MCF 10A (cell line): ENCODE measurements at regions of chr1 and their contacts with region 1.

Region 1: GRCh38 chr1:159936273-159936904 is 9.0 kb downstream of the IGSF9 start:
- DNase-seq: peak; percentile 85
- H3K4me3 Mint-ChIP-seq: no peak overlapping the region
- H3K27ac Mint-ChIP-seq: no peak overlapping the region
- H3K4me1 Mint-ChIP-seq: peaks cover 22% of the 10 kb centered on the region
- H3K27me3 Mint-ChIP-seq: no peaks in the 10 kb centered on the region
- CTCF ChIP-seq: peak; percentile 100

Region 2: DNA sequence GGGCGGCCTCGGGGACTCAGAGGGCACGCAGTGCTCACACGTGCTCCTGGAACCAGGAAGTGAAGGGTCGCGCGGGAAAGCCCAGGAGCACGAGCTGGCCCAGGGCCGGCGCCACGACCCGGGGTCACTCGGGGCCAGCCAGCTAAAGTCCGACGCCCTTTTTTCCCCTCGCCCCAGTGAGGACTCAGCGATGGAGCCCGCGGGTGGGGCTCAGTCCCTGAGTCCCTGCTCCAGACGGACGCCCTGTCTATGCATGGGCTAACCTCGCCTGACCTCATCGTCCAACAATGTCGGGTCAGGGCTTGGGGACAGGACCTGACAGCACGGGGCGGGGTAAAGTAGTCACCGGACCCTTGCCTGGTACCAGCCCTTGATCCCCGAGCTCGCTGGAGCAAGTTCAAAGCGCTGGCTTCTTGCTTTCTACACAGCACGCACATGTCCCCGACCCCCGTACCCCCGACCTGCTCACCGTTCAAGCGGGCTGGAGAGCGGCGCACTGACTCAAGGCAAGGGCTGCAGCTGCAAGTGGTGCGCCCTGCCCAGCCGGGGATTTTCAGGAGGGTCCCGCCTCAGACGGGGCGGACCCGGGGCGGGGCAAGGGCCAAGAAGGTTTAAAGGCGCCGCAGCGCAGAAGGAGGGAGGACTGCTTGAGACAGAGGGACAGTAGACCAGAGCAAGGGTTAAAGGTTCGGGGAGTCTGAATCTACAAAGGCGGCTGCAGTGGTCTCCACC is 11.2 kb before region 1 on chr1 and contains the start of gene TAGLN2:
- CTCF ChIA-PET with region 1: interaction called, 91 read pairs
- POLR2A ChIA-PET with region 1: interaction called, 7 read pairs
- intact Hi-C with region 1: no loop called
- DNase-seq: peak; percentile 97
- H3K4me3 Mint-ChIP-seq: peak within 1 kb of the TSS; percentile 81
- H3K27ac Mint-ChIP-seq: peak within 1 kb of the TSS; percentile 99
- H3K4me1 Mint-ChIP-seq: peaks cover 44% of the 10 kb centered on the region
- H3K27me3 Mint-ChIP-seq: no peaks in the 10 kb centered on the region
- CTCF ChIP-seq: no peak
- total RNA-seq, gene TAGLN2: 464 and 483 TPM in 2 replicates

Region 3: DNA sequence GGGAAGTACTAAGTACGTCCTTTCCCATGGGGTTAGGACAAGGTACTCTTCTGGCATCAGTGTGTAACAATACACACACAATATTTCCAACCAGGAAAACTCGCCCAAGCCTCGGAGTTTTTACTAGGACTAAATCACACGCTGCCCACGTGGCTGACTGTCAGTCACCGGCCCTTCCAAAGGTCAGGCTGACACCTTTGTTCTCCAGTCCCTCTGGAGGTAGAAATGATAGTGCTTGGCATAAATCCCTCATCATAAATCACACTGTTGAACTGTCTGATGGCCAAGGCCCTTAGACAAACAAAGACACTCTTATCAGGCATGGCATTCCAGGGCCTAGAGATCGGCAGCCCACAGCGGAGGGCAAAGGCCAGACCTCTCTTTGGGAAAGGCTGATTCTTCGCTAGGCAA is 34.5 kb after region 1 on chr1:
- CTCF ChIA-PET with region 1: interaction called, 34 read pairs
- POLR2A ChIA-PET with region 1: interaction called, 3 read pairs
- intact Hi-C with region 1: no loop called
- DNase-seq: no peak
- H3K4me3 Mint-ChIP-seq: no peak overlapping the region
- H3K27ac Mint-ChIP-seq: no peak overlapping the region
- H3K4me1 Mint-ChIP-seq: peaks cover 6% of the 10 kb centered on the region
- H3K27me3 Mint-ChIP-seq: no peaks in the 10 kb centered on the region
- CTCF ChIP-seq: no peak

Region 4: DNA sequence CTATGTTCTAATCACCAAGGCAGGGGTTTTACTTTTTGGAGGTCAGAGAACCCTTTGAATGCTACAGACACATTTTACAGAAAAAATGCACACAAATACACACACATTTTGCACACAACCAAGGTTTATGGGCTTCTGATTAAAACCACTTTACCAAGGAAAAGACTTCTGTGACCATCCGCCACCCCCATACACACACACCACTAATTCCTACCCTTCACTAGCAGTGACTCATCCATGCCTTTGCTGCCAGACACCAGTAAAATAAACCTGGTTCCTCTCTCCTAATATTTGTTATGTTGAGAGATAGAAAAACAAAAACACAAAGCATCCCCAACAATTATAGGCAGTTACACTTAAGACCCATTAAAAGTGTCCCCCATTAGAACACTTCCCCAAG is 82.5 kb after region 1 on chr1:
- CTCF ChIA-PET with region 1: interaction called, 21 read pairs
- POLR2A ChIA-PET with region 1: interaction called, 3 read pairs
- intact Hi-C with region 1: no loop called
- DNase-seq: peak; percentile 67
- H3K4me3 Mint-ChIP-seq: no peak overlapping the region
- H3K27ac Mint-ChIP-seq: no peak overlapping the region
- H3K4me1 Mint-ChIP-seq: peaks cover 27% of the 10 kb centered on the region
- H3K27me3 Mint-ChIP-seq: no peaks in the 10 kb centered on the region
- CTCF ChIP-seq: no peak

Region 5: DNA sequence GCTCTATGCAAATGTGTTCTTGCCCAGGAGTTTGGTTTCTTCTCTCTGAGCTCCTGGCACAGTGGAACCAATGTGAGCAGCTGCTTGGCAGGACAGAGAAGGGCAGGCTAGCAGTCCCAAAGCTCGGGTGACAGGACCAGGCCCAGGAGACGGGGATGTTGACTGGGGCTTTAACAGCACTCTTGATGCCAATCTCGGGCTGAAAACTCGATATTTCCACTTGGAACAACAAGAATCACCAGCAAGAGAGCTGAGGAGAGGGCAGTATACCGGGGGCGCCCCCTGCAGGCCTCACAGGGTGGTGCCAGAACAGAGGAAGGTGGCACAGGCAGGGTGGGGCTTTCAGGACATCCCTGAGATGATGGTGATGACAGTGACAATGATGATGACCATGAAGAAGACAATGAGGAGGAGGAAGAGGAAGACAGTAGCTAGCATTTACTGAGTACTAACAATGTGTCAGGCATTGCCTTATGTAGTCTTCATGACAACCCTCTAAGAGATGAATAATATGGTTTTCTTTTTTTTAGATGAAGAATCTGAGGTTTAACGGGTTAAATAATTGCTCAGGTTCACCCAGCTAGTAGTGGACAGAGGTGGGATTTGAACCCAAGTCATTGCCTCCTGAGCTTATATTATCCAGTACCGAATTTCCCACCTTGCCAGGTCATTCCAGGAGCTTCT is 142.3 kb after region 1 on chr1:
- CTCF ChIA-PET with region 1: interaction called, 19 read pairs
- POLR2A ChIA-PET with region 1: no interaction called
- intact Hi-C with region 1: loop called (anchors 10 kb)
- DNase-seq: peak; percentile 67
- H3K4me3 Mint-ChIP-seq: no peak overlapping the region
- H3K27ac Mint-ChIP-seq: no peak overlapping the region
- H3K4me1 Mint-ChIP-seq: no peaks in the 10 kb centered on the region
- H3K27me3 Mint-ChIP-seq: peaks cover 64% of the 10 kb centered on the region
- CTCF ChIP-seq: peak; percentile 98

Region 6: GRCh38 chr1:160108888-160109662 is 172.7 kb after region 1 on chr1:
- CTCF ChIA-PET with region 1: no interaction called
- POLR2A ChIA-PET with region 1: no interaction called
- intact Hi-C with region 1: no loop called
- DNase-seq: peak; percentile 88
- H3K4me3 Mint-ChIP-seq: no peak overlapping the region
- H3K27ac Mint-ChIP-seq: no peak overlapping the region
- H3K4me1 Mint-ChIP-seq: peaks cover 12% of the 10 kb centered on the region
- H3K27me3 Mint-ChIP-seq: no peaks in the 10 kb centered on the region
- CTCF ChIP-seq: peak; percentile 52